ENCODE measurements at regions of chr13 and their contacts with region 1.

Region 1: GRCh38 chr13:72696579-72696978 is 30.9 kb downstream of the MZT1 start:
- DNase-seq: peak; percentile 26
- H3K4me3 ChIP-seq: no peak overlapping the region
- CTCF ChIP-seq: no peak

Region 2: DNA sequence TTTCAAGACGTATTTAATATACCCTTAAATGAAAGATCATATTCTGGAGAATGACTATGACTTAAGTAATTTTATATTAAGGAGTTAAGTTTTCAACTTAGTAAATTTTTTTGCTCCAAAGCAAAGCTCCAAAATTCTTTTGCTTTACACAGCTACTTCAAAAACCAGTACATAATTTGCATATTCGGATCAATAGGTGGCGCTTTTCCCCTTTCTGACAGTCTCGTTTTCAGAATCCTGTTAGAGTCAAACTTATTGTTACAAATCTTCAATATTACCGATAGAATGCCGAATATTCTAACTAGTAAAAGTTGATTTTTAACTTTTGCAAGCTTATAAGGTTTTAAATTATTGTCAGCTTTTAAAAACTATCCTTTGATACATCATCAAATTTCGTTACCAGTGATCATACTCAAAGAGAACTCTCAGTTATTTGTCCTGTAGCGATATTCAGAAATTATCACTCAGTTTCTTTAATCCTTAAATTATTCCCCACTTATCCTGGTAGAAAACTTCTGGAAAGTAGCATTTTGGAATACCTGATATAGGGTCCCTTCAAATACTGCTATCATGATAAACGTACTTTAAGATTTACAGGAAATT is 1735.6 kb before region 1 on chr13:
- in situ Hi-C with region 1: loop called (anchors 25 kb)
- DNase-seq: peak; percentile 42
- H3K4me3 ChIP-seq: no peak overlapping the region
- CTCF ChIP-seq: peak; percentile 67

Region 3: DNA sequence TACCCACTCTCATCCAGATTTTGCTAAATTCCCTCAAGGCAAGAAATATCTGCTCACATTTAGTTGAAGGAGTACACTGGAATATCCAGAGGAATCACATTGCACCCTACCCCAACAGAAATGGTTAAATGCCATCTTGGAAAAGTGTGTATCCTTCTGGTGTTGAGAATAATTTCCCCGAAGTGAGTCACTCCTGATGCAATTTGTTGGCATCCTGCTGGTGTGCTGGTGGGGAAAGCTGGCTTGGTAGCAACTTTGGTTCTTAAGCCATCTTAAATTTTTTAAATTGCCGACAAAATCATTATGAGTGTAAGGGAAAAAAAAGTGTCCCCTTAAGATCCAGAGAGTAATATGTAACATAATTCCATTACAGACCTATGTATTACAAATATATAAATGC is 492.3 kb before region 1 on chr13:
- in situ Hi-C with region 1: no loop called
- DNase-seq: peak; percentile 62
- H3K4me3 ChIP-seq: no peak overlapping the region
- CTCF ChIP-seq: no peak

Region 4: DNA sequence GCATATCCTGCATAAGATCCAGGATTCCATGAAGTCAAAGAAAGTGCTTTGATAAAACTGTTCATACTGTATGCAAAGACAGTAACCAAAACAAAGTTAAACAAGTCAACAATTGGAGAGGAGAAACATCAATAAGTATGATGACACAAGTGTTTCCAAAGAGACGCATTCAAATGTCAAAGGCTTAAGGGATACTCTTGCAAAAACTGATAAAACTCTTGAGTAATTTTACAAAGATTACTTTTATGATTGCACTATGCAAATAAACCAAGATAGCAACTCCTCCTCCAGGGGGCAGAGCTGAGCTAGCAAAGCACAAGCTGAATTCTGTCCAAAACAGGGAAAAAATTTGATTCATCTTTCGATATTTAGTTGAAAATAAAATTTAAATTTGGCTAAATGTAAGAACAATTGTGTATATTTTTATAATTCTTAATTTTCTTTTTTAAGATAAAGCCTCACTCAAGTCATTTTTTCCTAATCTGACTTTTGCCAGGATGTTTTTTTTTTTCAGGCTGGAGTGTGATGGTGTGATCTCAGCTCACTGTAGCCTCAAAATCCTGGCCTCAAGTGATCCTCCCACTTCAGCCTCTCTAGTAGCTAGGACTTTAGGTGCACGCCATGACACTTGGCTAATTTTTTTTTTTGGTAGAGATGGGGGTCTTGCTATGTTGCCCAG is 53.1 kb before region 1 on chr13:
- in situ Hi-C with region 1: no loop called
- DNase-seq: peak; percentile 13
- H3K4me3 ChIP-seq: no peak overlapping the region
- CTCF ChIP-seq: peak; percentile 79

Region 5: GRCh38 chr13:73943137-73943964 is 1246.8 kb after region 1 on chr13:
- in situ Hi-C with region 1: no loop called
- DNase-seq: no peak
- H3K4me3 ChIP-seq: no peak overlapping the region
- CTCF ChIP-seq: no peak

Measured in astrocyte of the cerebellum (primary cell).